ENCODE measurements at regions of chr9 and their contacts with region 1.

Region 1: DNA sequence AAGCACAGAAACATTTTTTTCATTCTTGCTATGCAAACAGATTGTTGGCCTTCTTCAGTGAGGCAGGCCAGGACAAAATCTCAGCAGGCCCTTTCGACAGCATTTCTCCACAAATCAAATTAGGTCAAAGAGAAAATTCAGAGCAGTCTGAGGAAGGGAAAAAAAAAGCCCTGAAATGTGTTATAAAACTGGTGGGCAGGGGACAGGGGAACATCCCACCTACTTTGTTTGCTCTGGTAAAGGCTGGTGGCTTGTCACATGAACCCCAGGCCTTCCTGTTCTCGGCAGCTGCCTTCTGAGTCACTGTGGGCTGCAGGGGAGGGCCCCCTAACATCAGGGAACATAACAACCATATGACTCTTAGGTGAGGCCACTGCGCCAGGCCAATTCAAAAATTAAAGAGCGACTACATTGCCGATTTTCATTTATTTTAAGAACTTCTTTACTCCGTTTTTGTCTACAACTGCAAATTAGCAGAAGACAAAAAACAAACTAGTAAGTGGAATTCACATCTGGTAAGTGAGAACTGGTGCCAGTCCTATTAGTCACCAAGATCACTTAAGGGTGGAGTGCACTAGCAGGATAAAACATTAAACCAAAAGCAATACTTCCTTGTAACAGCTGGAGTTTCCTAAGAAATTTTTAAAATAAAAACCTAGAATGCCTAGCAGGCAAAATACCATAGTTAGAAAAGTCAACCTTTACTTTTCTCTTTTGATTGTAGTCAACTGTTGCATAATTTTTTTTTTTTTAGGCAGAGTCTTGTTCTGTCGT is 46.2 kb upstream of the DENND4C start:
- DNase-seq: peak; percentile 26
- ATAC-seq: peak; percentile 98
- H3K4me3 Mint-ChIP-seq: peak overlapping the region; percentile 46
- H3K27ac Mint-ChIP-seq: peak overlapping the region; percentile 94
- H3K4me1 Mint-ChIP-seq: peaks cover 10% of the 10 kb centered on the region
- H3K27me3 Mint-ChIP-seq: no peaks in the 10 kb centered on the region
- CTCF ChIP-seq: no peak

Region 2: GRCh38 chr9:19298436-19299000 is 114.2 kb after region 1 on chr9:
- CTCF ChIA-PET with region 1: no interaction called
- POLR2A ChIA-PET with region 1: interaction called, 11 read pairs
- intact Hi-C with region 1: no loop called
- DNase-seq: no peak
- ATAC-seq: no peak
- H3K4me3 Mint-ChIP-seq: no peak overlapping the region
- H3K27ac Mint-ChIP-seq: no peak overlapping the region
- H3K4me1 Mint-ChIP-seq: no peaks in the 10 kb centered on the region
- H3K27me3 Mint-ChIP-seq: no peaks in the 10 kb centered on the region
- CTCF ChIP-seq: no peak

Measured in activated B cell treated with CpG ODN at 0.5 μM for 24 hours (primary cell).